ENCODE measurements at regions of chr1 and their contacts with region 1.

Region 1: GRCh38 chr1:17207966-17208418 is 3.1 kb downstream of the PADI1 start:
- DNase-seq: peak in 8 of 9 experiments; percentile 6 to 65 (median 40)
- ATAC-seq: peak; percentile 74
- H3K4me3 ChIP-seq: no peak overlapping the region
- H3K4me3 Mint-ChIP-seq: no peak overlapping the region
- H3K27ac ChIP-seq: no peak overlapping the region
- H3K27ac Mint-ChIP-seq: no peak overlapping the region
- H3K4me1 ChIP-seq: peaks cover 27% of the 10 kb centered on the region
- H3K4me1 Mint-ChIP-seq: peaks cover 39% of the 10 kb centered on the region
- H3K27me3 ChIP-seq: peaks cover 0 to 7% of the 10 kb centered on the region in 2 experiments
- H3K27me3 Mint-ChIP-seq: peaks cover 54% of the 10 kb centered on the region
- CTCF ChIP-seq: no peak

Region 2: DNA sequence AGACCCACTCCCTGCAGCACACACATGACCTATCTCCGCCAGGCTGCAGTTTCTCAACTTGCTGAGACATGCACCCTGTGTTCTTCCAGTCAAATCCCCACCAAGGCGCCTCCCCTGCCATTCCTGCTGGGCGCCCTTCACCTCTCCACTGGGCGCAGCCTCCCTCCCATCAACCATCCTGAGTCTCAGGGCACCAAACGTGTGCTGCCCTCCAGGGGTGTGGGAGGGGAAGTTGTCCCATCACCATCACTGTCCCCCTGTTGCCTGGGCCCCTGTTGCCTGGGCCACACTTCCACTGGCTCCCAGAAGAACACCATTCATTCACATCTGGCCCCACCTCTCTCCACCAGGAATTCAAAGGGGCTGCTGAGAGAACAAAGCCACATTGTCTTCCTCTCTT is 1843.3 kb before region 1 on chr1:
- CTCF ChIA-PET with region 1: no interaction called
- POLR2A ChIA-PET with region 1: no interaction called
- intact Hi-C with region 1: loop called in 1 of 2 experiments (anchors 10 kb)
- DNase-seq: peak in 2 of 9 experiments; percentile 40 to 55
- ATAC-seq: no peak
- H3K4me3 ChIP-seq: no peak overlapping the region
- H3K4me3 Mint-ChIP-seq: no peak overlapping the region
- H3K27ac ChIP-seq: no peak overlapping the region
- H3K27ac Mint-ChIP-seq: no peak overlapping the region
- H3K4me1 ChIP-seq: no peaks in the 10 kb centered on the region
- H3K4me1 Mint-ChIP-seq: no peaks in the 10 kb centered on the region
- H3K27me3 ChIP-seq: no peaks in the 10 kb centered on the region
- H3K27me3 Mint-ChIP-seq: peaks cover 2% of the 10 kb centered on the region
- CTCF ChIP-seq: no peak

Region 3: DNA sequence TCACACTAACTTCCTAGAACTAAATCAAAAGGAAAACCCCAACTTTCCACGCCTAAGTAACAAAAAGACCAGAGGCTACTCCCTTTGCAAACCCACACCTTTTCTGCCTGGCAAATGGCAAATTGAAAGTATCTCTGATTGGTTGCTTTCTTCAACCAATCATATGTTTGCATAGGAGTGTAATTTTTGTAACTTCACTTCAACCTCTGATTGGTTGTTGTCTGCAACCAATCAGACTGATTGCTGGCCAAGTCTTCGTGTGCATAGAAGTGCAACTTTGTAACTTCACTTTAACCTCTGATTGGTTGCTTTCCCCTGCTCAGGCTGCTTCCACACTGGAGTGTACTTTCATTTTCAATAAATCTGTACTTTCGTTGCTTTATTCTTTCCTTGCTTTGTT is 51.9 kb before region 1 on chr1:
- CTCF ChIA-PET with region 1: no interaction called
- POLR2A ChIA-PET with region 1: no interaction called
- intact Hi-C with region 1: no loop called
- DNase-seq: no peak
- ATAC-seq: no peak
- H3K4me3 ChIP-seq: no peak overlapping the region
- H3K4me3 Mint-ChIP-seq: no peak overlapping the region
- H3K27ac ChIP-seq: no peak overlapping the region
- H3K27ac Mint-ChIP-seq: no peak overlapping the region
- H3K4me1 ChIP-seq: no peaks in the 10 kb centered on the region
- H3K4me1 Mint-ChIP-seq: no peaks in the 10 kb centered on the region
- H3K27me3 ChIP-seq: no peaks in the 10 kb centered on the region
- H3K27me3 Mint-ChIP-seq: peaks cover 19% of the 10 kb centered on the region
- CTCF ChIP-seq: no peak

Region 4: GRCh38 chr1:17183388-17184160 is 24.4 kb before region 1 on chr1:
- CTCF ChIA-PET with region 1: no interaction called
- POLR2A ChIA-PET with region 1: interaction called, 3 read pairs
- intact Hi-C with region 1: loop called in 1 of 2 experiments (anchors 1 kb)
- DNase-seq: no peak
- ATAC-seq: no peak
- H3K4me3 ChIP-seq: no peak overlapping the region
- H3K4me3 Mint-ChIP-seq: no peak overlapping the region
- H3K27ac ChIP-seq: no peak overlapping the region
- H3K27ac Mint-ChIP-seq: no peak overlapping the region
- H3K4me1 ChIP-seq: peaks cover 28% of the 10 kb centered on the region
- H3K4me1 Mint-ChIP-seq: peaks cover 34% of the 10 kb centered on the region
- H3K27me3 ChIP-seq: no peaks in the 10 kb centered on the region
- H3K27me3 Mint-ChIP-seq: no peaks in the 10 kb centered on the region
- CTCF ChIP-seq: no peak

Measured in CD8-positive, alpha-beta T cell (primary cell).